Activated naive CD4-positive, alpha-beta T cell treated with anti-CD3 and anti-CD28 coated beads for 36 hours (primary cell): ENCODE measurements at regions of chr2 and their contacts with region 1.

Region 1: DNA sequence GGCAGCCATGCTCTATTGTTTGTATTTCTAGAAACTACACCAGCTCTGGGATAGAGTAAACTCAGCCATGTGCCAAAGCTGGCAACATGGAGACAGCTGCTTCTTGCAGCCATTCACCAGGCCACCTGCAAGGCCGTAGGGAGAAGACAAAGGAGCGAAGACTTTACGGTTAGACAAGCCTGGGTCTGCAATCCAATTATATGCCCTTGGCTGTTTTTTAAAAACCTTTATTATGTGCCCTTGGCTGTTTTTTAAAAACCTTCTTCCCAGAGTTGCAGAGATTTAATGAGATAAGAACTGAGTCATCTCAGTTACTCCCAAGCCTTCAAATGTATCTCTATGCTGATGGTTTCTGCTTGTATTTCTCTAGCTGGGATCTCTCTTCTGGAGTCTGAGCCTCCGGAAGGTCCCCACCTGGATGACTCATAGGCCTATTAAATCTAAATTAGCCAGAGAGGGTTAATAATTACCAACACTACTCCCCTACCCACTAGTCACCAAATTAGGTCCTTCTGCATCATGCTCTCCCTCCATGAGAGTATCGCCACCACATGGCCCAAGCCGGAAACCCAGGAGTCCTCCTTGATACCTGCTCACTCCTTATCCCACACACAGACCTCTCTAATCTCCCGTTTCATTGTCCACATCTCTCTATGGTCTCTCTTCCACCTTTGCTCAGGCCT is 17.5 kb upstream of the DPP4 start:
- DNase-seq: peak; percentile 60
- H3K4me3 Mint-ChIP-seq: no peak overlapping the region
- H3K27ac Mint-ChIP-seq: no peak overlapping the region
- H3K4me1 Mint-ChIP-seq: peaks cover 6% of the 10 kb centered on the region
- H3K27me3 Mint-ChIP-seq: no peaks in the 10 kb centered on the region

Region 2: GRCh38 chr2:161857920-161858319 is 233.5 kb before region 1 on chr2:
- CTCF ChIA-PET with region 1: no interaction called
- intact Hi-C with region 1: no loop called
- DNase-seq: peak; percentile 14
- H3K4me3 Mint-ChIP-seq: no peak overlapping the region
- H3K27ac Mint-ChIP-seq: no peak overlapping the region
- H3K4me1 Mint-ChIP-seq: peaks cover 4% of the 10 kb centered on the region
- H3K27me3 Mint-ChIP-seq: no peaks in the 10 kb centered on the region

Region 3: GRCh38 chr2:162007447-162008040 is 83.9 kb before region 1 on chr2:
- CTCF ChIA-PET with region 1: no interaction called
- intact Hi-C with region 1: loop called (anchors 1 kb)
- DNase-seq: no peak
- H3K4me3 Mint-ChIP-seq: no peak overlapping the region
- H3K27ac Mint-ChIP-seq: no peak overlapping the region
- H3K4me1 Mint-ChIP-seq: peaks cover 37% of the 10 kb centered on the region
- H3K27me3 Mint-ChIP-seq: no peaks in the 10 kb centered on the region